PC-3 (cell line): ENCODE measurements at regions of chr11 and their contacts with region 1.

Region 1: DNA sequence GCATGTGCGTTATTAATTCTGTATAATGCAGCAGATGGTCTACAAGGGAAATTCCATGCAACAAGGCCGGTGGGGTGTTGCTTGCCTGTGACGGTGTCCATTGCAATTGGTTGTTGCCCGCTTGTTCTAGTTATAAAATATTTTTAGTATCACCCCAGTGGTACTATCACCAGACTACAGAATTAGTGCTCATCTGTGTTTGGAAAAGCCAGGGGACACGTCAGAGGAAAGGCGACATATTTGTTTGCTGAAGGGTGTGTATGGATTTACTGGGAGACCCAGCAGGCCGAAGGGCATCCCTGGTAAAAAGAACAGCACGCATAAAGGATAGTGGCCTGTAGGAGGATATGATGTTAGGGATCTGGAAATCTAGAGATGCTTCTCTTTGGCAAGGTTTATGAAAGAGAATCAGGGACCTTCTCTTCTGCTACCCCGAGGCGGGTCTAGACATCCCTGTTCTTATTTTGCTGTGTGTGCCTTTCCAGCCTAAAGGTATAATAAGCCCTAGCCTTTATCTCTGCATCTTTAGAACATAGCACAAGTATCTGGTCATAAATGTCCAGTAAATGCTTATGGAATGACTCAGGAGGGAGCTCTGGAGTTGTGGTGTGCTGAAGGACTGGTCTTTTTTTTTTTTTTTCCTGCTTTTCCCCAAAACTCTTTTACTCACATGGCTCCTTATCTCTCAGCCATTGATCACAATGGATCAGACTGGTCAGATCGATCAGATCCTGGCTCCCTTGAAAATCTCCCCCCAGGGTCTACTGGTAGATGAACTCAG is 90.9 kb downstream of the LDLRAD3 start:
- DNase-seq: peak; percentile 92
- ATAC-seq: peak; percentile 94
- H3K4me3 ChIP-seq: peak overlapping the region; percentile 42
- H3K27ac ChIP-seq: peak overlapping the region; percentile 93
- H3K4me1 ChIP-seq: peaks cover 43% of the 10 kb centered on the region
- H3K27me3 ChIP-seq: no peaks in the 10 kb centered on the region
- CTCF ChIP-seq: no peak

Region 2: GRCh38 chr11:35953081-35953760 is 81.5 kb before region 1 on chr11:
- CTCF ChIA-PET with region 1: no interaction called
- POLR2A ChIA-PET with region 1: no interaction called
- intact Hi-C with region 1: loop called (anchors 2 kb)
- DNase-seq: peak; percentile 31
- ATAC-seq: peak; percentile 16; the same call in 1 of the 2 replicates
- H3K4me3 ChIP-seq: no peak overlapping the region
- H3K27ac ChIP-seq: peak overlapping the region; percentile 29
- H3K4me1 ChIP-seq: peaks cover 54% of the 10 kb centered on the region
- H3K27me3 ChIP-seq: no peaks in the 10 kb centered on the region
- CTCF ChIP-seq: no peak

Region 3: DNA sequence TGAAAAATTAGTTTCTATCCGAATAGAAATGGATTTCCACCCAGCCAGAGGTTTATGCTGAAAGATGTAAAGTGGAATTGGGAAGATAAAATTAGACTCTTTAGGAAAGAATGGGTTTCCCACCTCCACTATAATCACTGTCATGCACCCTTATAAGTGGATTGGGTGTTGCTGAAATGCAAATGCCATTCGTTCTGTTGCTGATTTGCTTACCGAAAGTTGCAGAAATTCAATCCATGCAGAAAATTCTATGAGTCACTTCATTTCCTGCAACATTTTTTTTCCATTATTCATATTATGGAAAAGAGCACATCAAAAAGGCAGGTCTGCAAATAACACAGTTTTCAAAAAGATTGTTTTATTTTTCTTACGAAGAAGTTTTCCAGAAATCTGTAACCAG is 25.3 kb before region 1 on chr11:
- CTCF ChIA-PET with region 1: no interaction called
- POLR2A ChIA-PET with region 1: no interaction called
- intact Hi-C with region 1: loop called (anchors 2 kb)
- DNase-seq: peak; percentile 69
- ATAC-seq: peak; percentile 29
- H3K4me3 ChIP-seq: peak overlapping the region; percentile 47
- H3K27ac ChIP-seq: peak overlapping the region; percentile 68
- H3K4me1 ChIP-seq: peaks cover 66% of the 10 kb centered on the region
- H3K27me3 ChIP-seq: no peaks in the 10 kb centered on the region
- CTCF ChIP-seq: no peak

Region 4: GRCh38 chr11:36131721-36132397 is 97.1 kb after region 1 on chr11:
- CTCF ChIA-PET with region 1: no interaction called
- POLR2A ChIA-PET with region 1: no interaction called
- intact Hi-C with region 1: loop called (anchors 5 kb)
- DNase-seq: peak; percentile 29
- ATAC-seq: peak; percentile 69
- H3K4me3 ChIP-seq: no peak overlapping the region
- H3K27ac ChIP-seq: no peak overlapping the region
- H3K4me1 ChIP-seq: peaks cover 11% of the 10 kb centered on the region
- H3K27me3 ChIP-seq: no peaks in the 10 kb centered on the region
- CTCF ChIP-seq: peak; percentile 68

Region 5: DNA sequence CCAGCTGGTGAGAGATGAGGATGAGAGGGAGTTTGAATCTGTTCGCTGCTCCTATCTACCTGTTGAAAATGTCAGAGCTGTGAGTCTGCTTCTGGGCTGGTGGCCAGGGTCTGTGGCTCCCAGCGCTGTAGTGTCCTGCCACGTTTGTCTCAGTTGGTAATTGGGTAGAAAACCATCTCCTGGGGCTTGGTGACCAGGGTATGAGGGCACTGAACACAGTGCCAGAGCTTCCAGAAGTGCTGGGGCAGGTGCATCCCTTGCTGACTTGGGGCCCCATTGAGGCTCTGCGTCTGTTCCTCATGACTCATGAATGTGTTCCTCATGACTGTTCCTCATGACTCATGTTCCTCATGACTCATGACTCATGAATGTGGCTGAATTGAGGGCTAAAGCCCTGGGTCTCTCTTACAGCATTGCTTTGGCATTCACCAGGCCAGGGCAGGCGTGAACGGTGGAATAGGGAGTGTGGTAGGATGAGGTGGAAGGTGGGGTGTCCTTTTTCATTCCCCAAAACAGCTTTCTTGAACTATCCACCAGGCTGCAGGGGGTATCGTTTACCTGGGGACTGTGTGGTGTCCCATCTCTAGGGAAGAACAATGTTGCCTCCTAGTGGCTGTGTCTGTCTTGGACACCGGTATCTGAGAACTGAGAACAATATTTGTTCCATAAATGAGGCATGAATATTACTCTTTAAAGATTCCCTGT is 114.9 kb after region 1 on chr11:
- CTCF ChIA-PET with region 1: no interaction called
- POLR2A ChIA-PET with region 1: no interaction called
- intact Hi-C with region 1: loop called (anchors 5 kb)
- DNase-seq: peak; percentile 99
- ATAC-seq: peak; percentile 96
- H3K4me3 ChIP-seq: peak overlapping the region; percentile 10; the same call in 1 of the 2 replicates
- H3K27ac ChIP-seq: peak overlapping the region; percentile 70
- H3K4me1 ChIP-seq: peaks cover 29% of the 10 kb centered on the region
- H3K27me3 ChIP-seq: no peaks in the 10 kb centered on the region
- CTCF ChIP-seq: peak; percentile 79

Region 6: DNA sequence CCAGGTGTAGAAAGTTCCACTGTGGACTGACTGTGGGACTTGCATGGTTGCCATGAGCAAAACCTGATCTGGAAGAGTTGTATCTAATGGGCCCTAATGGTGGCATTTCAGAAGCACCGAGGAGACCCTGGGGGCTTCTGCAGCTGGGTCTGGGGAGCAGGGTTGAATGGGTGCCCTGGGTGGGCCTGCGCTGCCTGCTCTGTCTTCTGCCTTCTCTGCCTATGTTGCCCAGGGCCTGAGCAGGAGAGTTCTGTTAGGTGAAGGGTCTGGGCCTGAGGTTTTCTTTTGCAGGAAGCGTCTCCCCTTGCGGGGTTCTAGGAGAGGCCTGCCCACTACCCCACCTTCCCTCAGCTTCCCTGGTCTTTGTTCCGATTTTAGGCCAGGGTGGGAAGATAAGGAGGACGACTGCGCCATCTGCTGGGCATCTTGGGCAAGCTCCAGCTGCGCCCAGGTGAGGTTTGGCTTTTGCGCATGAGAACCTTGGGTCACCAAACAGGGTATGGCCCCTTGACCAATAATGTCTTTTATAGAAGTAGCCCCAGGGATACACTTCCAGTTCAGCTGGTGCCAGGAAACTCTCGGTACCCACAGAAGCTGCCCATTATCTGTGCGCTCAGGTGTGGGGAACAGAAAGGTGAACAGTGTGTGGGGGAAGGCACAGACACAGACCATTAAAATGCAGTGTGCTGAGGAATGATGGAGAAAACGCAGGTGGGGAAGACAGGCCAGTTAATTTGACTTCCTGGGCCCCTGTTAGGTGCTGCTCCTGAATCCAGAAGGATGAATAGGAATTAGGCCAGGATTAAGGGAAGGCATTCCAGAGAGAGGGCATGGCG is 231.3 kb after region 1 on chr11:
- CTCF ChIA-PET with region 1: no interaction called
- POLR2A ChIA-PET with region 1: no interaction called
- intact Hi-C with region 1: loop called (anchors 5 kb)
- DNase-seq: peak; percentile 70
- ATAC-seq: peak; percentile 86
- H3K4me3 ChIP-seq: no peak overlapping the region
- H3K27ac ChIP-seq: no peak overlapping the region
- H3K4me1 ChIP-seq: no peaks in the 10 kb centered on the region
- H3K27me3 ChIP-seq: no peaks in the 10 kb centered on the region
- CTCF ChIP-seq: peak; percentile 90